GM12878 (cell line): ENCODE measurements at regions of chr3 and their contacts with region 1.

Region 1: DNA sequence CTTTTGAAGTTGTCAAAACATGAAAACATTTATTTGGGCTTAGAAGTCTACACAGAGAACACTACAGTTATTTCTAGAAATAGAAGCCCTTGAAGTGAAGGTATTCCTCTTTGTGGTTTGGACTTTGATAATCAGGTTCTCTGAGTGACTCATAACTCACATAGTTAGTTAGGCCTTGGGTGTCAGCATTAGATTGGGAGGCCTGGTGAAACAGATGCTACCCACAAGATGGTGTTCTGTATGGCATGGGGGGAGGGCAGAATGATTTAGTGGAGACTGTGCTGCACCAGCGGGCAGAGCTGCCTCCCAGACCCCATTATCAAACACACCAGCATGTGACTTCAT is 108.9 kb upstream of the ETV5 start:
- DNase-seq: peak; percentile 63
- ATAC-seq: peak; percentile 97
- H3K4me3 ChIP-seq: no peak overlapping the region
- H3K27ac ChIP-seq: peak overlapping the region; percentile 57
- H3K4me1 ChIP-seq: peaks cover 26% of the 10 kb centered on the region
- H3K27me3 ChIP-seq: no peaks in the 10 kb centered on the region; a peak in 1 of 4 replicates
- CTCF ChIP-seq: no peak
- EP300 ChIP-seq: peak; percentile 52 to 67; a peak in 3 of 4 replicates
- POLR2A ChIP-seq: no peak
- RAD21 ChIP-seq: no peak

Region 2: GRCh38 chr3:186152889-186153292 is 64.9 kb before region 1 on chr3:
- CTCF ChIA-PET with region 1: interaction called, 4 read pairs
- POLR2A ChIA-PET with region 1: no interaction called
- RAD21 ChIA-PET with region 1: interaction called, 11 read pairs
- SMC1A ChIA-PET with region 1: interaction called, 11 read pairs
- in situ Hi-C with region 1: no loop called
- intact Hi-C with region 1: loop called (anchors 5 kb)
- DNase-seq: peak; percentile 60
- ATAC-seq: peak; percentile 95
- H3K4me3 ChIP-seq: peak overlapping the region; percentile 34; the same call in 1 of the 2 replicates
- H3K27ac ChIP-seq: peak overlapping the region; percentile 68
- H3K4me1 ChIP-seq: peaks cover 28% of the 10 kb centered on the region
- H3K27me3 ChIP-seq: no peaks in the 10 kb centered on the region
- CTCF ChIP-seq: no peak
- EP300 ChIP-seq: peak; percentile 56 to 68; a peak in 2 of 4 replicates
- POLR2A ChIP-seq: no peak
- RAD21 ChIP-seq: peak; percentile 2; the same call in 1 of the 2 replicates

Region 3: DNA sequence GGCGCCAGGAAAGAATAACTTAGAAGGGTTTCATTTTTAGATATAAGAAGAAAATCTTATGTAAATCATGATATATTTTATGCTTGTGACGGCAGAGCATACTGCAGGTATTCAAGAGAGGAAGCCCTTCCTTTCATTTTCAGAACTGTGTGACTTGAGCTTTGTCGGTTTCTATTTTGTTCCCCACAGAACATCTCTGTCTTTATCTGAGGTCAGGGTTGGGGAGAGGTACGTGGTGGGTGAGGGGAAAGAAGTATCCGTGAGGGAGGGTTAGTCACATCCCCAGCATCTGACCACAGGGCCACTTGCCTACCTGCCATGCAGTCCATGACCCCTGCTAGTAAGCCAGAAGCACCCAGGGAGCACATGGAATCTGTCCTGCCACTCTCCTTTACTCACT is 17.8 kb after region 1 on chr3:
- CTCF ChIA-PET with region 1: interaction called, 15 read pairs
- POLR2A ChIA-PET with region 1: interaction called, 3 read pairs
- RAD21 ChIA-PET with region 1: interaction called, 10 read pairs
- SMC1A ChIA-PET with region 1: interaction called, 23 read pairs
- in situ Hi-C with region 1: no loop called
- intact Hi-C with region 1: no loop called
- DNase-seq: no peak
- ATAC-seq: peak; percentile 89
- H3K4me3 ChIP-seq: no peak overlapping the region
- H3K27ac ChIP-seq: peak overlapping the region; percentile 64
- H3K4me1 ChIP-seq: peaks cover 34% of the 10 kb centered on the region
- H3K27me3 ChIP-seq: no peaks in the 10 kb centered on the region
- CTCF ChIP-seq: no peak
- EP300 ChIP-seq: no peak
- POLR2A ChIP-seq: no peak
- RAD21 ChIP-seq: 0 out of 2 replicates have a peak, but pooled peaks have one; percentile 11

Region 4: DNA sequence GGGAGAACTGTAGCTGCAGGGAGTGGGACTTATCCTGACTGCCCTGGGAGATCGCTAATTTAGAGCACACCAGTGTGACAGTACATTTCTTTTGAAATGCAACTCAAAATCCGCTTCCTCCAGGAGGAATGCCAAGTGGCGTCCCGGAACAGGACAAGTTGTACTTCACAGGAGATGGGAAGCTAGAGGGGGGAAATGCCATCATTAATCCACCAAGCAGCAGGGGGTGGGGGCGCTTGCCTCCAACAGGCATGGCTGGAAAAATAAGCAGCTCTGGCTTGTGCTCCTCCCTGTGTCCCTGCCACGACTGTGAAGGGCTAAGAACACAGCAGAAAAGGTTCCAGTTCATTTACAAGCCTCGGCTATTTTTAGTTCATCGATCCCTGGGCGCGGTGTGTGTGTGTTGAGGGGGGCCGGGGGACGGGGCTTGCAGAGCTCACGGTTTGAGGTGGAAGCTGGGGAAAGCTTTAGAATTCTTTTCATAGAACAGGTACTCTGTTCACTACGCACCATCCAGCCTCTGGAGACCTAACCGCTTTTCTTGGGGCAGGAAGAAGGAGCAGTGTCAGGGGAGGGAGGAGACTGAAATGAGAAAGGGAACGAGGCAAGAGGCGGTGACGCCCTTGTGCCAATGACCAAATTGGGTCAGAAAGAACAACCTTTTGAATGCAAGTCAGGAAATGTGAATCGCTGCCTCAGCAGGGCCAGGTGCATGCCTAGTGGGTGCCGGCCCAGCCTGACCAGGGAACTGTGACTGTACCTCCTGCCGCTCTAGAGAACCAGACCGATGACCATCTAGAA is 196.0 kb after region 1 on chr3:
- CTCF ChIA-PET with region 1: no interaction called
- POLR2A ChIA-PET with region 1: no interaction called
- RAD21 ChIA-PET with region 1: no interaction called
- SMC1A ChIA-PET with region 1: no interaction called
- in situ Hi-C with region 1: no loop called
- intact Hi-C with region 1: no loop called
- DNase-seq: peak; percentile 17
- ATAC-seq: peak; percentile 89
- H3K4me3 ChIP-seq: peak overlapping the region; percentile 35; the same call in 1 of the 2 replicates
- H3K27ac ChIP-seq: no peak overlapping the region
- H3K4me1 ChIP-seq: peaks cover 5% of the 10 kb centered on the region; the same call in 1 of the 2 replicates
- H3K27me3 ChIP-seq: no peaks in the 10 kb centered on the region; a peak in 1 of 4 replicates
- CTCF ChIP-seq: no peak
- EP300 ChIP-seq: no peak
- POLR2A ChIP-seq: no peak
- RAD21 ChIP-seq: no peak